ENCODE measurements at regions of chr3 and their contacts with region 1.

Region 1: GRCh38 chr3:115986555-115987207 is 363.4 kb downstream of the GAP43 start:
- DNase-seq: no peak
- ATAC-seq: no peak
- H3K4me3 Mint-ChIP-seq: no peak overlapping the region
- H3K27ac Mint-ChIP-seq: no peak overlapping the region
- H3K4me1 Mint-ChIP-seq: peaks cover 5% of the 10 kb centered on the region
- H3K27me3 Mint-ChIP-seq: peaks cover under 1% of the 10 kb centered on the region
- CTCF ChIP-seq: no peak

Region 2: DNA sequence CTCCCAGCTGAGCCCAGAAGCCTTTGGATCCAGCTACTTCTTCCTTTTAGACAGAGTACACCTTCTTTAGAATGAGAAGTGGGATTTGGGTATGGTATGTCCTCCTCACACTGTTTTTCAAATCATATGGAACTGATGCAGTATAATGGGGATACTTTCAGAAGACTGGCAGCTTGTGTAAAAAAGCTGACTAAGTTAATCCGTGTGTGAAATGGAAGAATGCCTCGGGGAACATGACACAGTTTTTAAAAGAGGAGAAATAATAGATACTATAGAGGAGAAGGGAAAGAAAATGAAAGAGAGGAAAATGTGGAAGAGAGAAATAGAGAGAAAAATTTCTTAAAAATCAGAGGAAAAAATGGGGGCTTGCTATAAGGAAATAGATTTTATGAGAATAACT is 770.6 kb after region 1 on chr3:
- CTCF ChIA-PET with region 1: no interaction called
- POLR2A ChIA-PET with region 1: no interaction called
- intact Hi-C with region 1: loop called (anchors 10 kb)
- DNase-seq: no peak
- ATAC-seq: no peak
- H3K4me3 Mint-ChIP-seq: no peak overlapping the region
- H3K27ac Mint-ChIP-seq: no peak overlapping the region
- H3K4me1 Mint-ChIP-seq: no peaks in the 10 kb centered on the region
- H3K27me3 Mint-ChIP-seq: peaks cover 4% of the 10 kb centered on the region
- CTCF ChIP-seq: no peak